ENCODE measurements at regions of chr6 and their contacts with region 1.

Region 1: GRCh38 chr6:110039364-110039980 is 61.4 kb downstream of the GPR6 start:
- DNase-seq: peak; percentile 63 to 89 (median 79)
- ATAC-seq: peak; percentile 70
- H3K4me3 ChIP-seq: peak overlapping the region; percentile 49 to 57
- H3K4me3 Mint-ChIP-seq: peak overlapping the region; percentile 89
- H3K27ac ChIP-seq: peak overlapping the region; percentile 39 to 75
- H3K27ac Mint-ChIP-seq: peak overlapping the region; percentile 95
- H3K4me1 ChIP-seq: peaks cover 9% of the 10 kb centered on the region
- H3K4me1 Mint-ChIP-seq: peaks cover 22% of the 10 kb centered on the region
- H3K27me3 ChIP-seq: no peaks in the 10 kb centered on the region
- H3K27me3 Mint-ChIP-seq: no peaks in the 10 kb centered on the region
- CTCF ChIP-seq: peak; percentile 75

Region 2: GRCh38 chr6:109526905-109527628 is 512.4 kb before region 1 on chr6:
- CTCF ChIA-PET with region 1: interaction called, 30 read pairs
- POLR2A ChIA-PET with region 1: interaction called, 3 read pairs
- intact Hi-C with region 1: loop called (anchors 1 kb)
- DNase-seq: peak in 8 of 9 experiments; percentile 31 to 74 (median 55)
- ATAC-seq: peak; percentile 68
- H3K4me3 ChIP-seq: no peak overlapping the region
- H3K4me3 Mint-ChIP-seq: no peak overlapping the region
- H3K27ac ChIP-seq: no peak overlapping the region
- H3K27ac Mint-ChIP-seq: no peak overlapping the region
- H3K4me1 ChIP-seq: no peaks in the 10 kb centered on the region
- H3K4me1 Mint-ChIP-seq: peaks cover 3% of the 10 kb centered on the region
- H3K27me3 ChIP-seq: no peaks in the 10 kb centered on the region
- H3K27me3 Mint-ChIP-seq: no peaks in the 10 kb centered on the region
- CTCF ChIP-seq: peak; percentile 58

Region 3: DNA sequence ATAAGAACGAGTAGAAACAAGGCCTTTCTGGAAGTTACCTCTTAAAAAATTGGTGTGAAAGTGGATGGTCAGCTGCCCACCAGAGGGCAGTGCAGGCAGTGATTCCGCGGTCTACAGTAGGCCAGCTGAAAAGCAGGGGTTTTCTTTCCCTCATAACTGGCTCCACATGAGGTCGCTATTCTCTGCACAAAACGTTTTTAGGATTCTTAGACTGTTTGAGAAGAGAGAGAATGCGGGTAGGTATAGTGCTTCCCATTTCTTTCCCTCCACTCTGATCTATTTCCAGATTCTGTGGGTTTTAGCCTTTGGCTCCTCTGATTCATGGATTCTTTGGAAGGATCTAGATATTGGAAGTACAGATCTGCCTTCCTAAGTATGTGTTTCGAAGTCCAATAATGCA is 334.2 kb before region 1 on chr6:
- CTCF ChIA-PET with region 1: interaction called, 78 read pairs
- POLR2A ChIA-PET with region 1: interaction called, 3 read pairs
- intact Hi-C with region 1: loop called (anchors 1 kb)
- DNase-seq: peak; percentile 50 to 90 (median 72)
- ATAC-seq: peak; percentile 98
- H3K4me3 ChIP-seq: no peak overlapping the region
- H3K4me3 Mint-ChIP-seq: no peak overlapping the region
- H3K27ac ChIP-seq: no peak overlapping the region
- H3K27ac Mint-ChIP-seq: no peak overlapping the region
- H3K4me1 ChIP-seq: peaks cover 10% of the 10 kb centered on the region
- H3K4me1 Mint-ChIP-seq: peaks cover 27% of the 10 kb centered on the region
- H3K27me3 ChIP-seq: no peaks in the 10 kb centered on the region
- H3K27me3 Mint-ChIP-seq: no peaks in the 10 kb centered on the region
- CTCF ChIP-seq: peak; percentile 82

Region 4: DNA sequence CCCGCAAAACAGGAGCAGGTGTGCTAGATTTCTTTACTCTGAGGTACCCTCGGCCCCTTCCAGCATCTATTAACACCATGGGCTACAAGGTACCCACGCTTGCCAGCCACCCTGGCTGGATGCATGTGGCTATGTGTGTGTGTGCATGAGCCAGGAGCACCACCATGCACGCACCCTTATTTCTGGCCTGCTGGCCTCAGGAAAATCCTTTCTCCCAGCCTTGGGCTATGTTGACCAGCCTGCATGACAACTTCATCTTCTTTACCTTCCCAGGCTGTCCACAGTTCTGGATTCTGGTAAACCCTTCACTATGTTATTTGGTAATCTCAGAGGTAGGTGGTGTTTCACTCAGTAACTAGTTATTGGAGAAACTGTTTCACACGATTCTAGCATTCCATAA is 21.0 kb before region 1 on chr6:
- CTCF ChIA-PET with region 1: interaction called, 23 read pairs
- POLR2A ChIA-PET with region 1: no interaction called
- intact Hi-C with region 1: no loop called
- DNase-seq: no peak
- ATAC-seq: no peak
- H3K4me3 ChIP-seq: no peak overlapping the region
- H3K4me3 Mint-ChIP-seq: no peak overlapping the region
- H3K27ac ChIP-seq: no peak overlapping the region
- H3K27ac Mint-ChIP-seq: no peak overlapping the region
- H3K4me1 ChIP-seq: peaks cover 15% of the 10 kb centered on the region
- H3K4me1 Mint-ChIP-seq: peaks cover 21% of the 10 kb centered on the region
- H3K27me3 ChIP-seq: no peaks in the 10 kb centered on the region
- H3K27me3 Mint-ChIP-seq: no peaks in the 10 kb centered on the region
- CTCF ChIP-seq: no peak

Region 5: DNA sequence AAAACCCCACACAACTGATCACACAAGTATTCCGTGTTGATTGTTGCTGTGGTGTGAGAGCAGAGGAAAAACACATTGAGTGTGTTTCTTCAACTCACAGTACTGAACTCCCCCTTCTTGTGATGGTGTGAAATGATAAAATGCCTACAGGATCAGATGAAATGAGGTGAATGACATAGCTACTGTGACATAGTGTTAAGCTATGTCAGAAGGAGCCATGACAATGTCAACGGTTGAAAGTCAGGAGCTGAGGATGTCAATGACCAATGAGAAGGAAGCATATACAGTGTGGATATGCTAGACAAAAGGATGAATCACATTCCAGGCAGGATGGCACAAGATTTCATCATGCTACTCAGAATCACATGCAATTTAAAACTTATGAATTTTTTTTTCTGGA is 101.2 kb after region 1 on chr6:
- CTCF ChIA-PET with region 1: no interaction called
- POLR2A ChIA-PET with region 1: no interaction called
- intact Hi-C with region 1: no loop called
- DNase-seq: no peak
- ATAC-seq: no peak
- H3K4me3 ChIP-seq: no peak overlapping the region
- H3K4me3 Mint-ChIP-seq: no peak overlapping the region
- H3K27ac ChIP-seq: no peak overlapping the region
- H3K27ac Mint-ChIP-seq: no peak overlapping the region
- H3K4me1 ChIP-seq: no peaks in the 10 kb centered on the region
- H3K4me1 Mint-ChIP-seq: no peaks in the 10 kb centered on the region
- H3K27me3 ChIP-seq: no peaks in the 10 kb centered on the region
- H3K27me3 Mint-ChIP-seq: peaks cover 15% of the 10 kb centered on the region
- CTCF ChIP-seq: no peak

Region 6: DNA sequence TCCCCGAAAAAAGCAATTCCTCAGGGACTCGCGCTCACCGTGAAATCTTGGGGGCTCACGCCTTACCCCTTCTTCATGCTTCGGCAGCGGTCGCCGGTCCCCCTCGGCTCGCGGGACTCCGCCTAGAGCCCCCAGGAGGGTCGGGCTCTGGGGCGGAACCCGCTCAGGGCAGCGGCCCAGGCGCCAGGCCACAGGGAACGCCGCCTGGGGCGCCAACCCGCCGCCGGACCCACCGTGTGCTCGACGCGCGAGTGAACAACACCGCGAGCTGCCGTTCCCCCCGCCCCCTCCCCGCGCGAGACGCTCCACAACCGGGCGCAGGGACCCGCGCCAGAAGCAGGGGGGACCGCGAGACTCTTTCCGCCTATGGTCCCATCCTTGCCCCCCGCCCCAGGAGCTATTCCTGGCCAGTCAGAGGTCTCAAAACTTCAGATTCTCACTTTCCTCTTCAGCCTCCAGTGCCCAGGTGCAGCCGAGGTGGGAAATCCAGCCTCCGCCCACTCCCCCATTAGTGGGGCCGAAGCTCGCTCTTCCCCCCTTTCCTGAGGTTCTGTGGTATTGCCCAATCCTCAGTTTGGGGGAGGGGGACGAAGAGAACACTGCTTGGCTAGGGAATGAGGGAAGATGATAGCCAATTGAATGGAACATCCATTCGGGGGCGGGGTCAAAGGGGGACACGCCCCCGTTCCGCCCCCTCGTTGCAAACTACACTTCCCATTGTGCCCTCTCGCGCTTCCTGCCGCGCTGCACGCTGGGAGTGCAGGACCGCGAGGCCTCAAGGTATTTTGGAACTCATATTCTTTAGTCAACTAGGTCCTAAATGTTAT is 140.1 kb after region 1 on chr6 and contains the start of gene WASF1:
- CTCF ChIA-PET with region 1: interaction called, 5 read pairs
- POLR2A ChIA-PET with region 1: interaction called, 7 read pairs
- intact Hi-C with region 1: loop called in 1 of 2 experiments (anchors 2 kb)
- DNase-seq: peak; percentile 77 to 95 (median 89)
- ATAC-seq: peak; percentile 84
- H3K4me3 ChIP-seq: peak within 1 kb of the TSS; percentile 83 to 96
- H3K4me3 Mint-ChIP-seq: peak within 1 kb of the TSS; percentile 77
- H3K27ac ChIP-seq: peak within 1 kb of the TSS; percentile 72 to 79
- H3K27ac Mint-ChIP-seq: peak within 1 kb of the TSS; percentile 38
- H3K4me1 ChIP-seq: peaks cover 28% of the 10 kb centered on the region
- H3K4me1 Mint-ChIP-seq: peaks cover 7% of the 10 kb centered on the region
- H3K27me3 ChIP-seq: no peaks in the 10 kb centered on the region
- H3K27me3 Mint-ChIP-seq: peaks cover 9% of the 10 kb centered on the region
- CTCF ChIP-seq: no peak
- total RNA-seq, gene WASF1: 1.1 to 1.7 TPM

Region 7: GRCh38 chr6:110191477-110191876 is 152.0 kb after region 1 on chr6:
- CTCF ChIA-PET with region 1: no interaction called
- POLR2A ChIA-PET with region 1: no interaction called
- intact Hi-C with region 1: no loop called
- DNase-seq: no peak
- ATAC-seq: no peak
- H3K4me3 ChIP-seq: no peak overlapping the region
- H3K4me3 Mint-ChIP-seq: no peak overlapping the region
- H3K27ac ChIP-seq: no peak overlapping the region
- H3K27ac Mint-ChIP-seq: no peak overlapping the region
- H3K4me1 ChIP-seq: peaks cover 18% of the 10 kb centered on the region
- H3K4me1 Mint-ChIP-seq: peaks cover 19% of the 10 kb centered on the region
- H3K27me3 ChIP-seq: no peaks in the 10 kb centered on the region
- H3K27me3 Mint-ChIP-seq: no peaks in the 10 kb centered on the region
- CTCF ChIP-seq: no peak

Measured in CD8-positive, alpha-beta T cell (primary cell).